ENCODE measurements at regions of chr4 and their contacts with region 1.

Region 1: DNA sequence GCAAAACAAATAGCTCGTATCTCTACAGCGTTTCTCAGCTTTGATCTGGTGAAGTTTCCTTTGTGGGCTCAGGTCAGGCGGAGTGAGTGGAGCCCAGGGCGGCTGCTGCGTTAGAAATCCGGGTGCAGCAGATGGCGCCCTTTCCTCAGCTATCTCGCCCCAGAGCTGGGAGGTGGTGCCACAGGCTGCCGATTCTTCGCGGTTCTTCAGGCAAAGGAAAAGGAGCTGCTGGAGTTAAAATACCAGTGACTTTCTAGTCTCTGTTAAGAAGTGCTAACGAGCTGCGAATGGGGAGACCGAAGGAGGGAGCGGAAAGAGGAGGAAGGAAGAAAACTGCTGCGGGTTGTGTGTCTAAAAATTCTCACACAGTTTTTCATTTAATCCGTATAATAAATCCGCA is 114.6 kb downstream of the CPE start:
- DNase-seq: peak; percentile 41
- H3K4me3 Mint-ChIP-seq: no peak overlapping the region
- H3K27ac Mint-ChIP-seq: no peak overlapping the region
- H3K4me1 Mint-ChIP-seq: peaks cover 5% of the 10 kb centered on the region
- H3K27me3 Mint-ChIP-seq: peaks cover 18% of the 10 kb centered on the region

Region 2: DNA sequence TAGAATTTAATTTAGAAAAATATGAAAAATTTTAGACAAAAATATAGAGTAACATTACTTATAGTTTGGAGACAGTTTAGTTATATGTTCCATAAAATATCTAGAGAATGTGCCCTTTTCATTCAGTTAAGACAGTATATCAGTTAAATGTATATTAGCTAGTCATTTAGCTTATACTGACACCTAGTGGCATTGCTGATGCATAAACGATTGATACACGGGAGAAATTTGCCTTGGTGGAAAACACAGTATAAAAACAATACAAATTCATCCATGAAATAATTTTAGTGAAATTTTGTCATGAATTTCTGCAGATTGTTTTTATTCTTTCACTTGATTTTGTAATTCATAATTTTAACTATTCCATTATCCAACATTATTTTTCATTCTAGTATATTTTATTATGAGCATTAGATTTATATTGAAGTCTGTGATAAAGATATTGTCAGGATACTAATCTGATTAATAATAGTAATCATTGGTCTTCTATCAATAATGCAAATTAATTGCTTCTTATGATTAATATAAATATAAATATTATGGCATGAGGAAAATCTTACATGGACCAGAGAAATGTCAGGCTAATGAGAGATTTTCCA is 598.7 kb after region 1 on chr4:
- intact Hi-C with region 1: loop called (anchors 1 kb)
- DNase-seq: no peak
- H3K4me3 Mint-ChIP-seq: no peak overlapping the region
- H3K27ac Mint-ChIP-seq: no peak overlapping the region
- H3K4me1 Mint-ChIP-seq: no peaks in the 10 kb centered on the region
- H3K27me3 Mint-ChIP-seq: no peaks in the 10 kb centered on the region

Measured in activated T-helper 1 cell treated with anti-CD3 and anti-CD28 coated beads, Interleukin-12 subunit alpha, Interleukin-12 subunit beta, Interleukin-2, Interleukin-4 antibody, amounts not matched to agents 30 ng/mL and 10 ng/mL and 1 ng/mL, durations not matched to agents 14 hours and 24 hours and 36 hours (primary cell).